Activated CD4-positive, alpha-beta memory T cell treated with anti-CD3 and anti-CD28 coated beads for 36 hours (primary cell): ENCODE measurements at regions of chr10 and their contacts with region 1.

Region 1: GRCh38 chr10:62851442-62851841 is 35.3 kb upstream of the EGR2 start:
- DNase-seq: peak; percentile 55
- H3K4me3 Mint-ChIP-seq: no peak overlapping the region
- H3K27ac Mint-ChIP-seq: no peak overlapping the region
- H3K4me1 Mint-ChIP-seq: peaks cover 46% of the 10 kb centered on the region
- H3K27me3 Mint-ChIP-seq: peaks cover 8% of the 10 kb centered on the region

Region 2: GRCh38 chr10:62779487-62780248 is 71.8 kb before region 1 on chr10:
- CTCF ChIA-PET with region 1: interaction called, 3 read pairs
- POLR2A ChIA-PET with region 1: no interaction called
- intact Hi-C with region 1: loop called (anchors 2 kb)
- DNase-seq: peak; percentile 89
- H3K4me3 Mint-ChIP-seq: no peak overlapping the region
- H3K27ac Mint-ChIP-seq: no peak overlapping the region
- H3K4me1 Mint-ChIP-seq: peaks cover 22% of the 10 kb centered on the region
- H3K27me3 Mint-ChIP-seq: peaks cover 1% of the 10 kb centered on the region

Region 3: GRCh38 chr10:62980687-62981086 is 129.2 kb after region 1 on chr10:
- CTCF ChIA-PET with region 1: no interaction called
- POLR2A ChIA-PET with region 1: no interaction called
- intact Hi-C with region 1: loop called (anchors 1 kb)
- DNase-seq: peak; percentile 56
- H3K4me3 Mint-ChIP-seq: no peak overlapping the region
- H3K27ac Mint-ChIP-seq: no peak overlapping the region
- H3K4me1 Mint-ChIP-seq: peaks cover 26% of the 10 kb centered on the region
- H3K27me3 Mint-ChIP-seq: peaks cover 11% of the 10 kb centered on the region

Region 4: GRCh38 chr10:63083904-63084689 is 232.7 kb after region 1 on chr10:
- CTCF ChIA-PET with region 1: interaction called, 21 read pairs
- POLR2A ChIA-PET with region 1: no interaction called
- intact Hi-C with region 1: loop called (anchors 1 kb)
- DNase-seq: peak; percentile 51
- H3K4me3 Mint-ChIP-seq: no peak overlapping the region
- H3K27ac Mint-ChIP-seq: no peak overlapping the region
- H3K4me1 Mint-ChIP-seq: peaks cover 2% of the 10 kb centered on the region
- H3K27me3 Mint-ChIP-seq: peaks cover 8% of the 10 kb centered on the region

Region 5: GRCh38 chr10:63173468-63174232 is 322.2 kb after region 1 on chr10:
- CTCF ChIA-PET with region 1: no interaction called
- POLR2A ChIA-PET with region 1: no interaction called
- intact Hi-C with region 1: loop called (anchors 5 kb)
- DNase-seq: no peak
- H3K4me3 Mint-ChIP-seq: no peak overlapping the region
- H3K27ac Mint-ChIP-seq: peak overlapping the region; percentile 65
- H3K4me1 Mint-ChIP-seq: peaks cover 52% of the 10 kb centered on the region
- H3K27me3 Mint-ChIP-seq: no peaks in the 10 kb centered on the region